ENCODE measurements at regions of chr16 and their contacts with region 1.

Region 1: GRCh38 chr16:339680-340079 is 12.8 kb downstream of the AXIN1 start:
- DNase-seq: no peak
- ATAC-seq: peak in 1 of 4 donors; percentile 12
- H3K4me3 ChIP-seq: no peak overlapping the region
- H3K27ac ChIP-seq: no peak overlapping the region
- H3K4me1 ChIP-seq: no peaks in the 10 kb centered on the region
- H3K27me3 ChIP-seq: no peaks in the 10 kb centered on the region
- CTCF ChIP-seq: no peak

Region 2: GRCh38 chr16:239953-240287 is 99.8 kb before region 1 on chr16:
- intact Hi-C with region 1: loop called in 1 of 3 experiments (anchors 10 kb)
- DNase-seq: no peak
- ATAC-seq: peak in 3 of 4 donors; percentile 4 to 28 (median 24)
- H3K4me3 ChIP-seq: no peak overlapping the region
- H3K27ac ChIP-seq: peak overlapping the region in 1 of 4 donors; percentile 37
- H3K4me1 ChIP-seq: peaks cover 0 to 14% (median 5%) of the 10 kb centered on the region in 3 donors
- H3K27me3 ChIP-seq: no peaks in the 10 kb centered on the region
- CTCF ChIP-seq: no peak

Measured in pancreas (tissue), 10 donors.